CD8-positive, alpha-beta T cell (primary cell): ENCODE measurements at regions of chr6 and their contacts with region 1.

Region 1: DNA sequence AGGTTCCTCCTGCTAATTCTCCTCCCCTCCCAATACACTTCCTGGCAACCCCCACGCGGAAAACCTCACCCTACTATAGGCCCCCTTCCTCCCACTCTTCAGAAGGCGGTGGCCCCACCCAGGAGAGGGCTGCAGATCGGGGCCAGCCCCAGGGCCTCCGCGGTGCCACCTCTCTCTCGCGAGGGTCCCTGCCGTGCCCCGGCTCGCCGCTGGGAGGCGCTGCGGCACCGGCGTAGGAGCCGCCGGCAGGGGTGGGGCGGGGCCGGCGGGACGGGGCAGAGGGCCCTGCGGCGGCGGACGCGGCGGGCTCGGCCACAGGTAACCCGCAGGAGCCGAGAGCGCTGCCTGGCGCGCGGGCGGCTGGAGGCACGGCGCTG is at the start of gene ANKRD6:
- DNase-seq: peak; percentile 69 to 92 (median 82)
- ATAC-seq: peak; percentile 96
- H3K4me3 ChIP-seq: peak within 1 kb of the TSS; percentile 42 to 66
- H3K4me3 Mint-ChIP-seq: peak within 1 kb of the TSS; percentile 89
- H3K27ac ChIP-seq: peak within 1 kb of the TSS in 1 of 2 experiments; percentile 28
- H3K27ac Mint-ChIP-seq: peak within 1 kb of the TSS; percentile 82
- H3K4me1 ChIP-seq: peaks cover 7% of the 10 kb centered on the region
- H3K4me1 Mint-ChIP-seq: peaks cover 25% of the 10 kb centered on the region
- H3K27me3 ChIP-seq: no peaks in the 10 kb centered on the region
- H3K27me3 Mint-ChIP-seq: no peaks in the 10 kb centered on the region
- CTCF ChIP-seq: peak; percentile 78
- total RNA-seq, gene ANKRD6: 4.3 to 5.9 TPM

Region 2: GRCh38 chr6:89412071-89413005 is 20.5 kb before region 1 on chr6 and contains the start of gene RRAGD:
- CTCF ChIA-PET with region 1: interaction called, 7 read pairs
- POLR2A ChIA-PET with region 1: no interaction called
- intact Hi-C with region 1: loop called in 1 of 2 experiments (anchors 2 kb)
- DNase-seq: peak; percentile 11 to 77 (median 52)
- ATAC-seq: peak; percentile 73
- H3K4me3 ChIP-seq: peak within 1 kb of the TSS; percentile 62 to 72
- H3K4me3 Mint-ChIP-seq: peak within 1 kb of the TSS; percentile 94
- H3K27ac ChIP-seq: peak within 1 kb of the TSS in 1 of 2 experiments; percentile 29
- H3K27ac Mint-ChIP-seq: peak within 1 kb of the TSS; percentile 77
- H3K4me1 ChIP-seq: peaks cover 14% of the 10 kb centered on the region
- H3K4me1 Mint-ChIP-seq: peaks cover 20% of the 10 kb centered on the region
- H3K27me3 ChIP-seq: peaks cover 0 to 5% of the 10 kb centered on the region in 2 experiments
- H3K27me3 Mint-ChIP-seq: peaks cover 13% of the 10 kb centered on the region
- CTCF ChIP-seq: no peak
- total RNA-seq, gene RRAGD: 5.6 to 9.3 TPM

Region 3: GRCh38 chr6:89638320-89639195 is 205.7 kb after region 1 on chr6 and contains the start of gene LYRM2:
- CTCF ChIA-PET with region 1: interaction called, 14 read pairs
- POLR2A ChIA-PET with region 1: interaction called, 5 read pairs
- intact Hi-C with region 1: loop called in 1 of 2 experiments (anchors 1 kb)
- DNase-seq: peak; percentile 83 to 95 (median 89)
- ATAC-seq: peak; percentile 95
- H3K4me3 ChIP-seq: peak within 1 kb of the TSS; percentile 84 to 90
- H3K4me3 Mint-ChIP-seq: peak within 1 kb of the TSS; percentile 99
- H3K27ac ChIP-seq: peak within 1 kb of the TSS; percentile 91 to 98
- H3K27ac Mint-ChIP-seq: peak within 1 kb of the TSS; percentile 99
- H3K4me1 ChIP-seq: peaks cover 15% of the 10 kb centered on the region
- H3K4me1 Mint-ChIP-seq: peaks cover 34% of the 10 kb centered on the region
- H3K27me3 ChIP-seq: no peaks in the 10 kb centered on the region
- H3K27me3 Mint-ChIP-seq: no peaks in the 10 kb centered on the region
- CTCF ChIP-seq: no peak
- total RNA-seq, gene LYRM2: 16.7 to 17.8 TPM